ENCODE measurements at regions of chr13 and their contacts with region 1.

Region 1: GRCh38 chr13:42594970-42595571 is 21.1 kb downstream of the TNFSF11 start:
- DNase-seq: peak; percentile 52
- H3K4me3 ChIP-seq: no peak overlapping the region
- H3K27ac ChIP-seq: peak overlapping the region in 3 of 4 donors; percentile 7 to 25 (median 24)
- H3K4me1 ChIP-seq: peaks cover 0 to 14% (median 8%) of the 10 kb centered on the region in 4 donors
- H3K27me3 ChIP-seq: no peaks in the 10 kb centered on the region
- CTCF ChIP-seq: peak; percentile 73 to 86 (median 82)
- EP300 ChIP-seq: no peak
- POLR2A ChIP-seq: no peak

Region 2: GRCh38 chr13:42129033-42129432 is 466.0 kb before region 1 on chr13:
- in situ Hi-C with region 1: no loop called
- intact Hi-C with region 1: no loop called
- DNase-seq: no peak
- H3K4me3 ChIP-seq: no peak overlapping the region
- H3K27ac ChIP-seq: no peak overlapping the region
- H3K4me1 ChIP-seq: peaks cover 0 to 22% (median 2%) of the 10 kb centered on the region in 4 donors
- H3K27me3 ChIP-seq: no peaks in the 10 kb centered on the region
- CTCF ChIP-seq: no peak
- EP300 ChIP-seq: no peak
- POLR2A ChIP-seq: no peak

Region 3: GRCh38 chr13:43132257-43132656 is 537.2 kb after region 1 on chr13:
- in situ Hi-C with region 1: loop called in 1 of 4 experiments (anchors 25 kb)
- intact Hi-C with region 1: no loop called
- DNase-seq: peak; percentile 42
- H3K4me3 ChIP-seq: no peak overlapping the region
- H3K27ac ChIP-seq: no peak overlapping the region
- H3K4me1 ChIP-seq: peaks cover 0 to 23% (median 8%) of the 10 kb centered on the region in 4 donors
- H3K27me3 ChIP-seq: peaks cover 12% of the 10 kb centered on the region
- CTCF ChIP-seq: peak in 4 of 5 experiments; percentile 16 to 56 (median 25)
- EP300 ChIP-seq: no peak
- POLR2A ChIP-seq: no peak

Region 4: GRCh38 chr13:43804461-43805070 is 1209.5 kb after region 1 on chr13:
- in situ Hi-C with region 1: loop called in 1 of 4 experiments (anchors 25 kb)
- intact Hi-C with region 1: no loop called
- DNase-seq: no peak
- H3K4me3 ChIP-seq: no peak overlapping the region
- H3K27ac ChIP-seq: peak overlapping the region in 3 of 4 donors; percentile 19 to 42 (median 19)
- H3K4me1 ChIP-seq: no peaks in the 10 kb centered on the region
- H3K27me3 ChIP-seq: no peaks in the 10 kb centered on the region
- CTCF ChIP-seq: peak; percentile 44 to 65 (median 61)
- EP300 ChIP-seq: no peak
- POLR2A ChIP-seq: no peak

Measured in transverse colon (tissue), 4 donors.